ENCODE measurements at regions of chr15 and their contacts with region 1.

Region 1: GRCh38 chr15:92808978-92809879 is 90.9 kb upstream of the CHD2 start:
- ATAC-seq: peak; percentile 71 to 90 (median 87)
- H3K4me3 ChIP-seq: peak overlapping the region; percentile 44 to 47 (median 44)
- H3K27ac ChIP-seq: peak overlapping the region; percentile 99 to 100
- H3K4me1 ChIP-seq: peaks cover 13 to 21% of the 10 kb centered on the region in 2 donors

Region 2: DNA sequence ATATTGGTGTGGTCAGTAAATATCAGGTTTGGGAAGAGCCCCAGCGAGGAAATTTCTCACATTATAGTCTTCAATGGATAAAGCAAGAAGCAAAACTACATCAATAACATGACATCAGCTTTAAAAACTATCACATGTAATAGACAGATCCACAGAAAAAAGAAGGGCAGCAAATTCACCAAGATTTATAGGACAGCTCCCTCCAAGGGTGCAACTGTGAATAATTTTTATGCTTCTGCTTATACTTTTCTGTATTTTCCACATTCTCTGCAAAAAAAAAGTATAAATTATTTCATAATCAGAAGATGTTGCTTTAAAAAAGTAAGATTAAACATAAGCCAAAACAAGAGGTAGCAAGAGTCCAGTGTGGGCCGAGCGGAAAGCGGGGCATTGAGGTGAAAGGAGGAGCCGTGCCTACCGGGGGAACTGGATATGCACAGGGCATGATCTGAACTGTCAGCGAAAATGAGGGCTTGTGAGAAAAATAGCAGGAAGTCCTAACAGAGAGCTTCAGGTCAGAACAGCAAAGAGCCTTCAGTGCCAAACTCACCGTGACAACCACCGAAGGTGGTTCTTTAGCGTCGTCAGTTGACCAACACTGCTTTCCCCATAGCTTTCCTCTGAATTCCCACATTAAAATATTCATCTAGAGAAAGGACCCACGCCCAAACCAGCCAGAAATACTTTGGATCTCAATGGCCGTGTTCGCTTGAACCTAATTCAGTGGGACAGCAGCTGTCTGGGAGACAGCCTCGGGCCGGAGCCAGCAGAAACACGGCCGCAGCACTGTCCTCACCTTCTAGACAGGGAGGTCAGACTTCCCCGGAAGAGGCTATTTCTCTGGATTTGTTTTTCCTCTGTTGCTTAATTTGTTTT is 213.5 kb before region 1 on chr15:
- in situ Hi-C with region 1: no loop called
- ATAC-seq: peak in 3 of 8 experiments; percentile 27 to 36 (median 29)
- H3K4me3 ChIP-seq: no peak overlapping the region
- H3K27ac ChIP-seq: no peak overlapping the region
- H3K4me1 ChIP-seq: peaks cover 0 to 5% of the 10 kb centered on the region in 2 donors

Region 3: DNA sequence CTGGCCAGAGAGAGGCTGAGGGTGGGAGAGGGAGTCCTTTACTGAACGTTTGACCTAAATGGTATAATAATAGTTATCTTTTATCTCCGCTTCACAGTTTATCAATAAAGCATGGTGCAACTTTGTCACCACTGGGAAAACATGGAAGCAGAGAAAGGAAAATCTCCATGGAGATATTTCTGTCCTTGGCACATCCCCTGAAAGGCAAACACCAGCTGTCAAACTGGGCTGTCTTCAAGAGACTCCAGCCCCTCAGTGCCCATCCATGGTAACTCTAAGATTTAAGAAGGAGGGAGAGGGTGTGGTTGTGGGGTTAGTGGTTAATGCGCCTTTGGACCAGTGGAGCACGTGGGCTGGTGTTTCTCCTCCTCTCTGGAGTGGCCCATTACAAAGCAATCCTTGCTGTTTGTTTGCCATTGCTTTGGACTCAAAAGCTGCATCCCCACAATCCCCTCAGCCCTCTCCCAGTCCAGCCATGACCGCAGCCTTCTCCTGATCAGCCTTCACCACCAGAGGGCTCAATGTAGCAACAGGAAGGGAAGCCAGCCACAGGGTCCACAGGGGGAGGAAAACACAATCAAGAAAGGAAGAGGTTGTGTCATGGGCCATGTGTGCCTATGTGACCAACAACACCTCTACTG is 115.4 kb before region 1 on chr15:
- in situ Hi-C with region 1: no loop called
- ATAC-seq: peak in 4 of 8 experiments; percentile 32 to 87 (median 69)
- H3K4me3 ChIP-seq: no peak overlapping the region
- H3K27ac ChIP-seq: no peak overlapping the region
- H3K4me1 ChIP-seq: peaks cover 0 to 11% of the 10 kb centered on the region in 2 donors

Region 4: DNA sequence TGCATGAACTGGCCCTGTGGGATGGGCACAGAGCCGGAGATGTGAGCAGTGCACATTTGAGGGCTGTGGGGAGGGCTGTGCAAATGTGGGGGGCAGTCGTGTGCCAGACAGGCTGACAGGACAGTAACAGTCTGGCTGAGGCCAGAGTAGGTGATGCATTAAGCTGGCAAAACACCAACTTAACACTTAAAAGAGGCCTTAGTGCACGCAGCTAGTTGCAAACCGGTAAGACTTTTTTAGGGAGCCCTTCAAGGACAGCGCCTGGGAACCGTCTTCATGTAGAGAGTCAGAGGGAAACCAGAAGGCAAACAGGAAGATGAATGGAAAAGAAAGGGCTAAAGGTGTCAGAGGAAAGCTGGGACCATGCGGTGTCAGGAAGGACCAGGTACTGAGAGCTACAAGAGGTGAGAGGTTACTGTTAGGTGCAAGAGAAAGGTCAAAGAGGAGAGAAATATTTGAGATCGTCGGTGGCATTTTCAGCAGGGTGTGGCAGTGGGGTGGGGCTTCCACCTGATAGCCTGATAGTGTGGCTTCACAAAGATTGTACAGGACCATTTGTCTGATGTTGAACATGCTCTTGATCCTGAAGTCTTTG is 60.9 kb after region 1 on chr15:
- in situ Hi-C with region 1: loop called in 1 of 9 experiments (anchors 10 kb)
- ATAC-seq: peak in 1 of 8 experiments; percentile 37
- H3K4me3 ChIP-seq: no peak overlapping the region
- H3K27ac ChIP-seq: no peak overlapping the region
- H3K4me1 ChIP-seq: no peaks in the 10 kb centered on the region

Region 5: GRCh38 chr15:92881802-92882696 is 72.8 kb after region 1 on chr15:
- in situ Hi-C with region 1: loop called in 2 of 9 experiments (anchors 10 kb)
- ATAC-seq: peak; percentile 93 to 98 (median 96)
- H3K4me3 ChIP-seq: peak overlapping the region; percentile 51 to 87 (median 79)
- H3K27ac ChIP-seq: peak overlapping the region; percentile 87 to 99
- H3K4me1 ChIP-seq: peaks cover 20 to 25% of the 10 kb centered on the region in 2 donors

Region 6: DNA sequence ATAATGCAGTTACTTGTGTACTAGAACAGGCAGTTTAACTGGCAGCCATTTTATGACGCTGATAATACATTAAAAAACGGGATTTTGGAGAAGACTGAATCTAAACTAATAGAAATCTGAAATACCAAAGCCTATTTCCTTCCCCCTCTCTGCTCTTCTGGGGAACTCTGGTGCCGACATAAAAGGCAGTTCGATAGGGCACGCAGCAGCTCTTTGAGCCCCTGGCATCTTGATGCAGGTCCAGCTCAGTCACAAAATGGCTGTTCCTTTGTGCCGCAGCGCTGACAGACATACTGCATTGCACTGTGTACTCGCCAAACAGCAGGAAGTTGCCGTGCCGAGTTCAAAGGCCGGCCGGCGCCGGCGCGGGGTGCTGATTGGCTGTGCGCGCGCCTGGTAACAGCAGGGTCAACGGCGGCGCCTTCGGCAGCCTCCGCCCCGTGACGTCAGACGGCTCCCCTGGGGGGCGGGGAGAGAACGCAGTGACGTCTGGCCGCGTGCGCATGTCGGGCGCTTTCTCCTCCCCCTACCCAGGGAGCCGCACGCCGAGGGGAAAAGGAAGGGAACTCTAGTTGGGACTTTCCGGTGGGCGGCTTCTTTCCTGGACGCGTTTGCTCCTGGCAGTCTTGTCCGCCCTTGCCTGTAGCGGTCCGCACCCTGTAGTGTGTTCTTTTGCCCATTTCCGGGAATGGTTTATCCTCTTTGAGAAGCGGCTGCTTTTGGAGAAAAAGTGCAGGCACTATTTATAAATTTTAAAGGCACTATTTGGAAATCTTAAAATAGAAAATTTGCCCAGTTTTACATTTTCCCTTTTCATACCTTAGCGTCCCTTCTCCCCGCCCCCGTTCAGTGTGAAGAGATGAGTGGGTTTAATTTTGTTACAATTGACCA is 95.0 kb after region 1 on chr15:
- in situ Hi-C with region 1: loop called in 7 of 9 experiments (anchors 10 to 25 kb)
- ATAC-seq: peak; percentile 78 to 94 (median 92)
- H3K4me3 ChIP-seq: peak overlapping the region; percentile 63 to 99 (median 77)
- H3K27ac ChIP-seq: peak overlapping the region; percentile 96 to 99
- H3K4me1 ChIP-seq: peaks cover 30 to 41% of the 10 kb centered on the region in 2 donors

Region 7: DNA sequence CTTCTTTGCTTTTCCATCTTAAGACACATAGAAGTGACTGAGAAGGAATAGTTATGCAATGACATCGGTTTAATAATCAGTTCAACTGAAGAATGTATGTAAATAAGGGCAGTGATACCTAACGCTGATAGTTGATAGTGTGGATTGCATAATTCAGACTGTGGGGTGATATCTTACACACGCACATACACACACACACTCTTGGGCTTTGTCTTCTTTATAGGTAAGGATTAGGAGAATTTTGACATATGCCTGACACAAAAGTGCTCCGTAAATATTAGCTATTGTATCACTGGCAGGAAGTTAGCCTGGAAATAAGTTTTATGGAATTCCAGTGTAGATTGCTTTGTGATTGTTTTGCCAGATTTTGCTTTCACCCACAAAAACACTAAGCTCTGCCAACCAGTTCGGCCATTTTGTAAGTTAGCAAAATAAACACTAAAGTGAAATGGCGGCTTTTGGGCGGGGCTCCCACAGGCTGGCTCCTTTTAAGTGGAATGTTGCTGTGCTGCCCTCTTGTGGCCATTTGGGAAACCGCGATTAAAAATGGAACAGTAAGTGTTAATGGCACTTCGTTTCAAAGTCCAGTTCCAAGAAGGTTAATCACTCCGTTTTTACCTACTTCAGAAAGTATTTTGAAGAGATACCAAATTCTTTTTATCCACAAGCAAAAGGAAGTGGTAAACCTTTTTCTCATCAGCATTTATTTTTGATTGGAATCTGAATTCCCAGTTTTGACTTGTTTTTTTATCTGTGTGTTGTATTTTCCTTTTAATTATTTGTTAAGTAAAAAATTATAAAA is 108.6 kb after region 1 on chr15:
- in situ Hi-C with region 1: loop called in 7 of 9 experiments (anchors 10 to 25 kb)
- ATAC-seq: peak; percentile 21 to 71 (median 62)
- H3K4me3 ChIP-seq: no peak overlapping the region
- H3K27ac ChIP-seq: peak overlapping the region; percentile 38 to 80
- H3K4me1 ChIP-seq: peaks cover 15 to 32% of the 10 kb centered on the region in 2 donors

Region 8: GRCh38 chr15:94212291-94212690 is 1403.1 kb after region 1 on chr15:
- in situ Hi-C with region 1: no loop called
- ATAC-seq: peak in 2 of 8 experiments; percentile 37 to 71
- H3K4me3 ChIP-seq: no peak overlapping the region
- H3K27ac ChIP-seq: no peak overlapping the region
- H3K4me1 ChIP-seq: no peaks in the 10 kb centered on the region